ENCODE measurements at regions of chr7 and their contacts with region 1.

Region 1: GRCh38 chr7:142508258-142508689 is 241.0 kb upstream of the PRSS1 start:
- DNase-seq: peak; percentile 53
- H3K4me3 Mint-ChIP-seq: no peak overlapping the region
- H3K27ac Mint-ChIP-seq: peak overlapping the region; percentile 44
- H3K4me1 Mint-ChIP-seq: peaks cover 21% of the 10 kb centered on the region
- H3K27me3 Mint-ChIP-seq: peaks cover 25% of the 10 kb centered on the region
- CTCF ChIP-seq: no peak

Region 2: GRCh38 chr7:142272841-142273240 is 235.4 kb before region 1 on chr7:
- CTCF ChIA-PET with region 1: no interaction called
- intact Hi-C with region 1: no loop called
- DNase-seq: no peak
- H3K4me3 Mint-ChIP-seq: no peak overlapping the region
- H3K27ac Mint-ChIP-seq: no peak overlapping the region
- H3K4me1 Mint-ChIP-seq: no peaks in the 10 kb centered on the region
- H3K27me3 Mint-ChIP-seq: peaks cover 57% of the 10 kb centered on the region
- CTCF ChIP-seq: no peak

Region 3: DNA sequence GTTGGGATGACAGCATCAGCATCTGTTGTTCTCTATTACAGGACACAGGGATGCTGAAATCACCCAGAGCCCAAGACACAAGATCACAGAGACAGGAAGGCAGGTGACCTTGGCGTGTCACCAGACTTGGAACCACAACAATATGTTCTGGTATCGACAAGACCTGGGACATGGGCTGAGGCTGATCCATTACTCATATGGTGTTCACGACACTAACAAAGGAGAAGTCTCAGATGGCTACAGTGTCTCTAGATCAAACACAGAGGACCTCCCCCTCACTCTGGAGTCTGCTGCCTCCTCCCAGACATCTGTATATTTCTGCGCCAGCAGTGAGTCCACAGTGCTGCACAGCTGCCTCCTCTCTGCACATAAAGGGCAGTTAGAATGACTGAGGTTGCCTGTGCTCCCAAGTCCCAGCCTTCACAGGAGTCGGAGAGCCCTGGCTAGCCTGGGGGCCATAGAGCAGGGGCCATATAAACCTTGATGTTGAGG is 108.2 kb before region 1 on chr7:
- CTCF ChIA-PET with region 1: no interaction called
- intact Hi-C with region 1: no loop called
- DNase-seq: no peak
- H3K4me3 Mint-ChIP-seq: no peak overlapping the region
- H3K27ac Mint-ChIP-seq: no peak overlapping the region
- H3K4me1 Mint-ChIP-seq: no peaks in the 10 kb centered on the region
- H3K27me3 Mint-ChIP-seq: peaks cover 49% of the 10 kb centered on the region
- CTCF ChIP-seq: no peak

Region 4: GRCh38 chr7:142471820-142472219 is 36.5 kb before region 1 on chr7:
- CTCF ChIA-PET with region 1: no interaction called
- intact Hi-C with region 1: loop called (anchors 1 kb)
- DNase-seq: no peak
- H3K4me3 Mint-ChIP-seq: no peak overlapping the region
- H3K27ac Mint-ChIP-seq: no peak overlapping the region
- H3K4me1 Mint-ChIP-seq: no peaks in the 10 kb centered on the region
- H3K27me3 Mint-ChIP-seq: peaks cover 82% of the 10 kb centered on the region
- CTCF ChIP-seq: no peak

Measured in Calu3 (cell line).